T-cell (primary cell): ENCODE measurements at regions of chr7 and their contacts with region 1.

Region 1: GRCh38 chr7:66628361-66629140 is at the start of gene KCTD7:
- DNase-seq: peak; percentile 80 to 97 (median 94)
- ATAC-seq: peak; percentile 92 to 95 (median 93)
- H3K4me3 ChIP-seq: peak within 1 kb of the TSS; percentile 62 to 95
- H3K4me3 Mint-ChIP-seq: peak within 1 kb of the TSS; percentile 75 to 89 (median 88)
- H3K27ac ChIP-seq: peak within 1 kb of the TSS; percentile 78
- H3K27ac Mint-ChIP-seq: peak within 1 kb of the TSS; percentile 89 to 91
- H3K4me1 ChIP-seq: peaks cover 22 to 53% of the 10 kb centered on the region in 2 experiments
- H3K4me1 Mint-ChIP-seq: peaks cover 43 to 48% (median 47%) of the 10 kb centered on the region in 3 donors
- H3K27me3 ChIP-seq: no peaks in the 10 kb centered on the region
- H3K27me3 Mint-ChIP-seq: no peaks in the 10 kb centered on the region
- total RNA-seq, gene KCTD7: 23.1 to 44.3 (median 39.3) TPM

Region 2: GRCh38 chr7:66359656-66360211 is 268.8 kb before region 1 on chr7:
- CTCF ChIA-PET with region 1: no interaction called
- POLR2A ChIA-PET with region 1: no interaction called
- DNase-seq: no peak
- ATAC-seq: no peak
- H3K4me3 ChIP-seq: no peak overlapping the region
- H3K4me3 Mint-ChIP-seq: no peak overlapping the region
- H3K27ac ChIP-seq: no peak overlapping the region
- H3K27ac Mint-ChIP-seq: no peak overlapping the region
- H3K4me1 ChIP-seq: no peaks in the 10 kb centered on the region
- H3K4me1 Mint-ChIP-seq: no peaks in the 10 kb centered on the region
- H3K27me3 ChIP-seq: peaks cover 0 to 2% of the 10 kb centered on the region in 2 experiments
- H3K27me3 Mint-ChIP-seq: no peaks in the 10 kb centered on the region

Region 3: GRCh38 chr7:66549466-66549865 is 79.1 kb before region 1 on chr7:
- CTCF ChIA-PET with region 1: no interaction called
- POLR2A ChIA-PET with region 1: no interaction called
- DNase-seq: no peak
- ATAC-seq: no peak
- H3K4me3 ChIP-seq: no peak overlapping the region
- H3K4me3 Mint-ChIP-seq: no peak overlapping the region
- H3K27ac ChIP-seq: no peak overlapping the region
- H3K27ac Mint-ChIP-seq: no peak overlapping the region
- H3K4me1 ChIP-seq: no peaks in the 10 kb centered on the region
- H3K4me1 Mint-ChIP-seq: no peaks in the 10 kb centered on the region
- H3K27me3 ChIP-seq: no peaks in the 10 kb centered on the region
- H3K27me3 Mint-ChIP-seq: no peaks in the 10 kb centered on the region

Region 4: DNA sequence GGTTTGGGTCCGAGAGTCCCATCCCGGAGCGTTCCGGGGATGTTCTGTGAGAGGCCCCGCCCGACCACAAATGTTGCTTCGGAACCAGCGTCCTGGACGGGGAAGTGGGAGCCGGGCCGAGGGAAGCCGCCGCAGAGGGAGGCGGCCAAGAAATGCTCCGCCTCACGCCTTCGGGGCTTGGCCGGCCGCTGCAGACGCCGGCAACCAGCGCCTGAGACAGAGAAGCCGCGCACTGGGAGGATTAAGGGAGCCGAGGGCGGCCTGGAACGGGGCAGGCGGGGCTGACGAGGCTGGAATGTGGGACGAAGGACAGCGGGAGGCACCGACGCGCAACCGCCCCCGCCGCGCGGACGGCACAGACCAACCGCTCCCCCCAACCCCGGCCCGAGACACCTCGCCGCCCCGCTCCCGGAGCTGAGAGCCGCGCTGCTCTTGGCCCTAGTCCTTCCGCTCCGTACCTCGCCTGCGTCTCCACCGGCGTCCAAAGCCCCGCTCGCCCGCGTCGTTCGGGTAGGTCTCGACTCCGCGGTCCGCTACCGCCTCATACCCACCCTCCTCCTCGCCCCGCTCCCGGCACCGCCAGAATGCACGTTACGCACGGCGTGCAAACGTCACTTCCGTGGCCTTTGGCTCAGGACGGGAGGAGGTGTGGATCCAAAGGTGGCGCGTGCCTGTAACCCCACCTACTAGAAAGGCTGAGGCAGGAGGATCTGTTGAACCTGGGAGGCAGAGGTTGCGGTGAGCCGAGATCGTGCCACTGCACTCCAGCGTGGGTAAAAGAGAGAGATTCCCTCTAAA is 36.6 kb before region 1 on chr7:
- CTCF ChIA-PET with region 1: no interaction called
- POLR2A ChIA-PET with region 1: interaction called, 6 to 10 read pairs
- DNase-seq: peak; percentile 76 to 96 (median 89)
- ATAC-seq: peak; percentile 99 to 100 (median 99)
- H3K4me3 ChIP-seq: peak overlapping the region; percentile 70 to 79
- H3K4me3 Mint-ChIP-seq: peak overlapping the region; percentile 92 to 97 (median 96)
- H3K27ac ChIP-seq: peak overlapping the region; percentile 83
- H3K27ac Mint-ChIP-seq: peak overlapping the region; percentile 88 to 96
- H3K4me1 ChIP-seq: peaks cover 8 to 37% of the 10 kb centered on the region in 2 experiments
- H3K4me1 Mint-ChIP-seq: peaks cover 41 to 60% (median 59%) of the 10 kb centered on the region in 3 donors
- H3K27me3 ChIP-seq: no peaks in the 10 kb centered on the region
- H3K27me3 Mint-ChIP-seq: no peaks in the 10 kb centered on the region

Region 5: DNA sequence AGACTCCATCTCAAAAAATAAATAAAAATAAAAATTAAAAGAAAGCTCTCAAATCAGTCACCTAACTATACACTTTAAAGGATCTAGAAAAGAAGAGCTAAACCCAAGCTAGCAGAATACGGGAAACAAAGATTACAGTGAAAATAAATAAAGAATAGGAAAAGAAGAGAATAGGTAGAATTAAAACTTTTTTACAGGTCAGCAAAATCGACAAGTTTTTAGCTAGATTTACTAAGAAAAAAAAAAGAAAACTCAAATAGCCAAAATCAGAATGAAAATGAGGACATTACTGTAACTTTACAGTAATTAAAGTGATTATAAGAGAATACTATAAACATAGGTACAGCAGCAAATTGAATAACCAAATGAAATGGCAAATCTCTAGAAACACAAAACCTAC is 60.5 kb after region 1 on chr7:
- CTCF ChIA-PET with region 1: no interaction called
- POLR2A ChIA-PET with region 1: interaction called in 1 of 2 experiments, 10 read pairs
- DNase-seq: no peak
- ATAC-seq: no peak
- H3K4me3 ChIP-seq: no peak overlapping the region
- H3K4me3 Mint-ChIP-seq: no peak overlapping the region
- H3K27ac ChIP-seq: no peak overlapping the region
- H3K27ac Mint-ChIP-seq: no peak overlapping the region
- H3K4me1 ChIP-seq: no peaks in the 10 kb centered on the region
- H3K4me1 Mint-ChIP-seq: peaks cover 5 to 9% (median 6%) of the 10 kb centered on the region in 3 donors
- H3K27me3 ChIP-seq: no peaks in the 10 kb centered on the region
- H3K27me3 Mint-ChIP-seq: no peaks in the 10 kb centered on the region

Region 6: GRCh38 chr7:66844552-66845378 is 216.2 kb after region 1 on chr7:
- CTCF ChIA-PET with region 1: no interaction called
- POLR2A ChIA-PET with region 1: interaction called in 1 of 2 experiments, 14 read pairs
- DNase-seq: peak; percentile 92 to 100 (median 98)
- ATAC-seq: peak; percentile 89 to 92 (median 90)
- H3K4me3 ChIP-seq: peak overlapping the region; percentile 89 to 92
- H3K4me3 Mint-ChIP-seq: peak overlapping the region; percentile 91 to 98 (median 96)
- H3K27ac ChIP-seq: peak overlapping the region; percentile 99
- H3K27ac Mint-ChIP-seq: peak overlapping the region; percentile 98 to 100
- H3K4me1 ChIP-seq: peaks cover 9 to 22% of the 10 kb centered on the region in 2 experiments
- H3K4me1 Mint-ChIP-seq: peaks cover 20 to 31% (median 27%) of the 10 kb centered on the region in 3 donors
- H3K27me3 ChIP-seq: no peaks in the 10 kb centered on the region
- H3K27me3 Mint-ChIP-seq: no peaks in the 10 kb centered on the region